ENCODE measurements at regions of chr20 and their contacts with region 1.

Region 1: GRCh38 chr20:354298-355064 is 7.6 kb downstream of the NRSN2 start:
- DNase-seq: peak; percentile 79
- H3K4me3 Mint-ChIP-seq: no peak overlapping the region
- H3K27ac Mint-ChIP-seq: no peak overlapping the region
- H3K4me1 Mint-ChIP-seq: no peaks in the 10 kb centered on the region
- H3K27me3 Mint-ChIP-seq: no peaks in the 10 kb centered on the region
- CTCF ChIP-seq: peak; percentile 96

Region 2: DNA sequence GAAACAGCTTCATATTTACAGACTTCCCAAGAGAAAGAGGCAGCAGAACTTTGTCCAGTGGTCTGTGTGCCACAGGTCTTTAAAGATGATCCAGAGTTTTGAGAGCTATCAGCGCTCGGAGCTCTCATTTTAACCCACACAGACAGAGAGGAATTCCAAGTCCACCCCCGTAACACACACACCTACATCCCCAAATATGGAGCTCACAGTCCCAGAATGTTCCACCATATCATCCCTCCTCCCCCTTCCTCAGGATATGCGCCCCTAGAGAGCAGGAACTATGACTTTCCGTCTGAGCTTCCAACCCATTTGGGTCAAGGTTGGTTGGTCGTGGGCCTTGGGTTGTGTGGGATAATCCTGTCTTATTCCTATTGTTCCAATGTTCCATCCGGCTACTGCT is 164.9 kb before region 1 on chr20 and contains the start of gene DEFB128:
- CTCF ChIA-PET with region 1: no interaction called
- POLR2A ChIA-PET with region 1: no interaction called
- intact Hi-C with region 1: no loop called
- DNase-seq: no peak
- H3K4me3 Mint-ChIP-seq: no peak within 1 kb of the TSS
- H3K27ac Mint-ChIP-seq: no peak within 1 kb of the TSS
- H3K4me1 Mint-ChIP-seq: no peaks in the 10 kb centered on the region
- H3K27me3 Mint-ChIP-seq: peaks cover 62% of the 10 kb centered on the region
- CTCF ChIP-seq: no peak
- total RNA-seq, gene DEFB128: not detected in 2 replicates

Region 3: DNA sequence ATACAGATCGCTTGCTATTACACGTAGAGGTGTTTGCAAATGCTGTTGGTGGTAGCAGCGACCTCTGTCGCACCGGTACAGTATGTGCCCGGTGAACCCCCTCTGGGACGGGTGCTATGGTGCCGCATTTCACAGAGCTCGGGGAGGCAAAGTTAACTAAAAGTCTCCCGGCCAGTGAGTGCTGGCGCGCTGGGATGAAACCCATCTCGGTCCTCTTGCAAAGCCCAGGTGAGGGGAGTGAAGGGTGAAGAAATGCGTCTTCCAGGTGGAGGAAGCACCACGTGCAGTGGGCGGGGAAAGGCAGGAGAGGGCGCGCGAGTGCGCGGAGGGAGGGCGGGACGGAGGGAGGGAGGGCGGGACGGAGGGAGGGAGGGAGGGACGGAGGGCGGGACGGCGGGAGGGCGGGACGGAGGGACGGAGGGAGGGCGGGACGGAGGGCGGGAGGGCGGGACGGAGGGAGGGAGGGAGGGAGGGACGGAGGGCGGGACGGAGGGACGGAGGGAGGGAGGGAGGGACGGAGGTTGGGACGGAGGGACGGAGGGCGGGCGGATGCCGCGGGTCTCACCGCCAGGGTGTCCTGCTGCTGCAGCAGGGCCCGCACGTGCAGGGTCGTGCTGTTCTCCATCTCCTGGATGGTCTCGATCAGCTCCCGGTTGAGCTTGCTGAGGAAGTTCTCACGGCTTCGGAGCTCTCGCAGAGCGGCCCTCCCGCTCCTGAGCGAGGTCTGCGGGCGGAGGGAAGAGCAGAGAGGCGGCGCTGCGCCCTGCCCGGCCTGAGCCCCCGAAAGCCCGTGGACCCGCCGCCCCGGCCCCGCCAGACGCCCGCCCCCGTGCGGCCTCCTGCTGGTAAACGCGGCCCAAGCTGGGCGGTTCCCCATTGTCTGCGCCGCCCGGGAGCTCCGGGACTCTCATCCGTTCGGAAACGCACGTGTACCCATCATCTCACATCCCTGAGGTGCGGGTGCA is 75.6 kb before region 1 on chr20:
- CTCF ChIA-PET with region 1: no interaction called
- POLR2A ChIA-PET with region 1: no interaction called
- intact Hi-C with region 1: no loop called
- DNase-seq: no peak
- H3K4me3 Mint-ChIP-seq: no peak overlapping the region
- H3K27ac Mint-ChIP-seq: no peak overlapping the region
- H3K4me1 Mint-ChIP-seq: no peaks in the 10 kb centered on the region
- H3K27me3 Mint-ChIP-seq: no peaks in the 10 kb centered on the region
- CTCF ChIP-seq: no peak

Region 4: DNA sequence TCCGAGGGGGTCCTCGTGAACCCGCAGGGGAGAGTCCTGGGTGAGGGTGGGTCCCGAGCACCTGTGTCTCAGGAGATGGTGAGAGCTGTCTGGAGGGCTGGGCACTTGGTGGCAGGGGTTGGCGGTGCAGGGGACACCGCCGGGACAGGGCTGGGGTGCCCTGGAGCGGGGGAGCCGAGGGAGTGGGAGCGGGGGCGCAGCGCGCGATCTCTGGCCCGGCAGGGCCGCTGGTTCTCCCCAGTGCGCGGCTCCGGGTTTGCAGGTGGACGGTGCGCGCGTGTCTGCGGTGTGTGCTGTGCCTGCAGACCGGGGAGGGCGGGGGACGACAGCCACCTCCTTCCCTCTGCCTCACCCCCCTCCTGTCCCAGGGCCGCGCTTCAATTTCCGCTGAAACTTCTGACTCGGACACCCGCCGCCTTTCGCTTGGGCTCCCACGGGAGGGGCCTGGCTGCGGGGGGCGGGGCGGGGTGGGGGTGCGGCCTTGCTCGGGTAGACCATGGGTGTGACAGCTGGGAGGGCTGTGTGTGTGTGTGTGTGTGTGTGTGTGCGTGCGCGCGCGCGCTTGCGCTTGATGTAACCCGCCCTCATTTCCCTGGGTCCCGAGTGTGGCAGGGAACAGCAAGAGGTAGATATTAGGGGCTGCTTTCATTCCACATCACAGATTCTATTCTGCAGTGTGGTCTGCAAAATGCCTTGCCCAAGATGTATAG is 27.3 kb after region 1 on chr20:
- CTCF ChIA-PET with region 1: interaction called, 80 read pairs
- POLR2A ChIA-PET with region 1: interaction called, 671 read pairs
- intact Hi-C with region 1: no loop called
- DNase-seq: peak; percentile 81
- H3K4me3 Mint-ChIP-seq: peak overlapping the region; percentile 79
- H3K27ac Mint-ChIP-seq: no peak overlapping the region
- H3K4me1 Mint-ChIP-seq: peaks cover 25% of the 10 kb centered on the region
- H3K27me3 Mint-ChIP-seq: no peaks in the 10 kb centered on the region
- CTCF ChIP-seq: no peak

Region 5: GRCh38 chr20:414161-414560 is 59.7 kb after region 1 on chr20:
- CTCF ChIA-PET with region 1: interaction called, 23 read pairs
- POLR2A ChIA-PET with region 1: no interaction called
- intact Hi-C with region 1: no loop called
- DNase-seq: no peak
- H3K4me3 Mint-ChIP-seq: no peak overlapping the region
- H3K27ac Mint-ChIP-seq: peak overlapping the region; percentile 66
- H3K4me1 Mint-ChIP-seq: peaks cover 45% of the 10 kb centered on the region
- H3K27me3 Mint-ChIP-seq: no peaks in the 10 kb centered on the region
- CTCF ChIP-seq: no peak

Region 6: DNA sequence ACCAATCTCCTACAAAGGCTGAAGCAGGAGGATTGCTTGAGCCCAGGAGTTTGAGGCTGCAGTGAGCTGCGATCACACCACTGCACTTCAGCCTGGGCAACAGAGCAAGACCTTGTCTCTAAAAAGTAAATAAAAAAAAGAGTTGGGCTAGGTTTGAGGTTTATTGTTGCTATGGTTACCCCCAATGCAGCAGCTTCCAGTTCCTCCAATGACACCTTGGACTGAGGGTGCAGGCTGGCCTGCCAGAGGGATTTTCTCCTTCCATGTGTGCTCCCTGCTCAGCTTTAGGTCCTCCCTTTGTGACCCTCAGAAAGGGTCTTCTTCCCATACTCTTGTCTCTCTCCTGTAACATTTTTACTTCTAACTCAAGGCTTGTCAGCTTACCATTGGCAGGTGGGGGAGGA is 118.4 kb after region 1 on chr20:
- CTCF ChIA-PET with region 1: interaction called, 46 read pairs
- POLR2A ChIA-PET with region 1: interaction called, 5 read pairs
- intact Hi-C with region 1: no loop called
- DNase-seq: no peak
- H3K4me3 Mint-ChIP-seq: no peak overlapping the region
- H3K27ac Mint-ChIP-seq: no peak overlapping the region
- H3K4me1 Mint-ChIP-seq: no peaks in the 10 kb centered on the region
- H3K27me3 Mint-ChIP-seq: peaks cover 21% of the 10 kb centered on the region
- CTCF ChIP-seq: no peak

Region 7: DNA sequence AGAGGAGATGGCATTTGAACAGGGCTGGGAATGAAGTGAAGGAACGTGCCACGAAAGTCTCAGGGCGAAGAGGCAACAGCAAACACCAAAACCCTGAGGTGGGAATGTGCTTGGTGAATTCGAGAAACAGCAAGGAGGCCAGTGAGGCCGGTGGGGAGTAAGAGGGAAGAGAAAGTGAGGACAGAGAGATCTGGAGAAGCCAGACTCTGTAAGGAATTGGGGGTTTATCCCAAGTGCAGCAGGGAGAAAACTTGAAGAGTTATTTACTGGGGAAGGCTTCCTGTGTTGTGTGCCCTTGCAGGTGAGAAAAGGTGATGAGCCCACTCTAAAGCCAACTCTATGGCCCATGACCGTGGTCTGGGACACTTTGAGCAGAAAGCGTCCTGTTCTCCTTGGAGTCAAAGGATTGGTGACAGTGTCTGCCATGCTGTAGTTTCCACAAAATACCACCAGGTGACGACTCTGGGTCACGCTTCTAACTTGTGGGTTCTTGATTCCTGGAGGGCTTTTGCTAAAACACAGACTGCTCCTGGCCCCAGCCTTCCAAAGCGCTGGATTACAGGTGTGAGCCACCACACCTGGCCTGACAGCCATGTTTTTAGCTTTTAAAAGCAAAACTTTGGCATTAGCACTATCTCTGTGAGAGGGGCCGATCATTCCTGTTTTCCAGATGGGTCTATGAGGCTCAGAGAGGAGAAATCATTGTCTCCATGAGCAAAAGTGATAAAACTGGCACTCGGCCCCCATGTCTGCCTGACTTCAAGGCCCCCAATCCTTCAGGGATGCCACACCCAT is 207.2 kb after region 1 on chr20:
- CTCF ChIA-PET with region 1: interaction called, 8 read pairs
- POLR2A ChIA-PET with region 1: no interaction called
- intact Hi-C with region 1: loop called (anchors 1 kb)
- DNase-seq: peak; percentile 79
- H3K4me3 Mint-ChIP-seq: no peak overlapping the region
- H3K27ac Mint-ChIP-seq: no peak overlapping the region
- H3K4me1 Mint-ChIP-seq: no peaks in the 10 kb centered on the region
- H3K27me3 Mint-ChIP-seq: peaks cover 18% of the 10 kb centered on the region
- CTCF ChIP-seq: peak; percentile 98

Region 8: DNA sequence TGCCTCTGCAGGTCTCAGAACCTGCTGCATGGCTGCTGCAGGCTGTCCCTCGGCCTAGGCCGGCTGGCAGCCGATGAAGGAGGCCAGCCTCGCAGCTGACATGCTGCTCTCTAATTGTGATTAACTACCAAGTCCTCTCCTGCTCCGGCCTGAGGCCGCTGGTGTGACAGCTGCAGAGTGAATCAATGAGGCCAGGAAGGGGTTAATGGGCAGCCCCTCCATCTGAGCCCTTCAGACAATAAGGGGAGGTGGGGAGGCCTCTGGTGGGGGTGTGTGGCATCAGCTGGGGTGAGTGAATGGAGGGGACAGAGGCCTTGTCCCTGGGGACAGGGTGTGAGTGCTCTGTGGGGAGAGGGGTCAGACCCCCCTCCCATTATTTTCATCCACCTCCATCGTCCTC is 379.4 kb after region 1 on chr20:
- CTCF ChIA-PET with region 1: interaction called, 11 read pairs
- POLR2A ChIA-PET with region 1: no interaction called
- intact Hi-C with region 1: loop called (anchors 5 kb)
- DNase-seq: no peak
- H3K4me3 Mint-ChIP-seq: no peak overlapping the region
- H3K27ac Mint-ChIP-seq: no peak overlapping the region
- H3K4me1 Mint-ChIP-seq: no peaks in the 10 kb centered on the region
- H3K27me3 Mint-ChIP-seq: peaks cover 38% of the 10 kb centered on the region
- CTCF ChIP-seq: no peak

Measured in MCF 10A (cell line).